MCF 10A (cell line): ENCODE measurements at regions of chr12 and their contacts with region 1.

Region 1: DNA sequence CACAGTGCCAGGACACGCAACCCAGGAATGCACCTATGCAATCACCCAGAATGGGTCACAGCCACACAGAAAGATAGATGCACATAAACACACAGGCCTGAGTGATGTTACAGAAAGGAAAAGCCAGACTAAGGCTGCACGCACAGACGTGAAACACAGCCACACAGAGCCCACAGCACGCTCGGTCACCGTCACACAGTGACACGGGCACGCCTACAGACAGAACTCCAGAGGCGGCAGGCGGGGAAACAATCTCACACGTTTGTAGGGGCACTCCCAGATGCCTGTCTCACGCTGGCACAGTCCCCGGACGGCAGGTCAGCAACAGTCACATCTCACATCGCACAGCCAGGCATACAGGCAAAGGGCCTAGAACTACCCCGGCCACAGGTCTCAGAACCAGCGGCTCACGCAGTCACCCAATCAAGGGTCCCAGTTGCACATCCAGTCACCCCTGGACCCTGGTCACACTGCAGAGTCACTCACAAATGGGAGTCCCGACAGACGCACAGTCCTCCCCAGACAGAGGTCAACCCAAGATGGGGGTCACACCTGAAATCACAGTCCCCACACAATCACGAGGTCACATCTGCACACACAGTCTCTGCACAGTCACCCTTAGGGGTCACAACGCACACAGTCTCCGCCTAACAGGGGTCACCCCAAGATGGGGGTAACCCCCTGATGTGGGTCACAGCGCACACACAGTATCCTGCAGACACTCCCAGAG is 790 bp downstream of the SSH1 start:
- DNase-seq: peak; percentile 69
- H3K4me3 Mint-ChIP-seq: peak overlapping the region; percentile 91
- H3K27ac Mint-ChIP-seq: peak overlapping the region; percentile 92
- H3K4me1 Mint-ChIP-seq: peaks cover 33% of the 10 kb centered on the region
- H3K27me3 Mint-ChIP-seq: no peaks in the 10 kb centered on the region
- CTCF ChIP-seq: no peak

Region 2: DNA sequence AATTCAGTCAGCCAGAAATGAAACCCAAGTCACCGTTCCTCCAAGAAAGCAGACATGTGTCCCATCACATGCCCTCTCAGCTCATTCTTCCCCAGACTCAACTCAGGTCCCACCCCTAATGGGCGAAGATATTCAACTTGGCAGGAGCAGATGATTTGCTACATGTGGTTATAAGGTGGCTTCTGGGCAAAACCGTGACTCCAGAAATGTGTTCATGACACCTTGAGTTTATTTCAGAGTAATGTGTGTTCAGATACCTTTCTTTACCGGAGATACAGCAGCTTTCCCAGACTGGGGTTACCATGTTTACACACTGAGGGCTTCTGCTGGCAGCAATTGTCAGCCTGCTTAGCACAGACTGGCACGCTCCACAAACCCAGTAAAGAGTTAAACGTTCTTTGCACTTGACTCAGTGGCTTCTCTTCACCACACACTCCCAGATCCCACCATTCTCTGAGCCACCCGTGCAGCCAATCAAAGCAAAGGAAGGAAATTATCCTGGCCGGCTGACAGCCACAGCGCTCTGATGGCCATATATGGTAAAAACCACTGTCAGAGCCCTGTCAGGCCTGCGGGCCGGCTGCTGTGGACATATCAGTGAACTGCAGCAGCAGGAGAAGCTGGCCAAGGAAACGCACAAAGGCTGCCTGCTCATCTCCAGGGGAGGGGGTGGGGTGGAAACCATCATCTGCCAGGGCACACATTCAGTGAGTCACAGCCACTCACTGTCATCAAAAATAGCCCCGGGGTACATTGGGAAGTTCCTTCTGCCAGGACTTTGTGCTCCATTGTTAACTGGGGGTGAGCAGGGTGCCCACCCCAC is 165.2 kb before region 1 on chr12:
- CTCF ChIA-PET with region 1: no interaction called
- POLR2A ChIA-PET with region 1: interaction called, 16 read pairs
- intact Hi-C with region 1: no loop called
- DNase-seq: peak; percentile 100
- H3K4me3 Mint-ChIP-seq: peak overlapping the region; percentile 71
- H3K27ac Mint-ChIP-seq: peak overlapping the region; percentile 98
- H3K4me1 Mint-ChIP-seq: peaks cover 46% of the 10 kb centered on the region
- H3K27me3 Mint-ChIP-seq: no peaks in the 10 kb centered on the region
- CTCF ChIP-seq: peak; percentile 22

Region 3: GRCh38 chr12:108816652-108817335 is 39.8 kb before region 1 on chr12:
- CTCF ChIA-PET with region 1: interaction called, 4 read pairs
- POLR2A ChIA-PET with region 1: interaction called, 13 read pairs
- intact Hi-C with region 1: loop called (anchors 1 kb)
- DNase-seq: peak; percentile 33
- H3K4me3 Mint-ChIP-seq: no peak overlapping the region
- H3K27ac Mint-ChIP-seq: peak overlapping the region; percentile 12
- H3K4me1 Mint-ChIP-seq: peaks cover 31% of the 10 kb centered on the region
- H3K27me3 Mint-ChIP-seq: no peaks in the 10 kb centered on the region
- CTCF ChIP-seq: no peak

Region 4: DNA sequence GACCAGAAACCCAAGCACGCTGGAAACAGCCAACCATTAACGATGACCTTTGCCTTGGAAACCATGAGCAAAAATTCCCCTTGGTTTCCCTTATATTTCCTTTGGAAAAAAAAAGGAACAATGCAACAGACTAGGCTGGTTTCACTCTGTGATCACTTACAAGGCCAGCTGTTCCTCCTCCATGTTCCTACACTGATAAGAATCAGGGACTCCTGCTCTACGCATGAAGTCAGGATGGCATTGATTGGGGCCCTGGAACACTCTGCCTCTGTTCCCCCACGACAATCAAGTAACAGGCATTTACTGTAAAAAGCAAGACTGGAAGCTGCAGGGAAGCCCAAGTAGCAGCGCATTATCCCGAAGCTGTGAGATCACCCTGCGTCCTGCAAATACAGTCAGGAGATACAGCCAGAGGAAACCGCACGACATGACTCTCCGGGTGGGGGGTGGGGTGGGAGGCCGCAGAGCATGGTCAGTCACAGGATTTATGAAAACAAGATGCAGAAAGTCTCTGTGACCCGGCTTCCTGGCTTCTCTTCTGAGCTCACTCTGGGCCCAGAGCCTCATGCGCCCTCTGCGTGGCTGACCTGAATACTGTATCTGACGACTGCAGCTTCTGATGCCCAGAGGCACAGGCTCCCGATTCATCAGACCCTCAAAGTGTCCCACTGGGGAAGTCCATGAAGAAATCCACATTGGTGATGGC is 30.3 kb before region 1 on chr12:
- CTCF ChIA-PET with region 1: interaction called, 3 read pairs
- POLR2A ChIA-PET with region 1: interaction called, 4 read pairs
- intact Hi-C with region 1: loop called (anchors 1 kb)
- DNase-seq: no peak
- H3K4me3 Mint-ChIP-seq: no peak overlapping the region
- H3K27ac Mint-ChIP-seq: no peak overlapping the region
- H3K4me1 Mint-ChIP-seq: peaks cover 21% of the 10 kb centered on the region
- H3K27me3 Mint-ChIP-seq: no peaks in the 10 kb centered on the region
- CTCF ChIP-seq: no peak

Region 5: GRCh38 chr12:108838194-108839017 is 18.2 kb before region 1 on chr12:
- CTCF ChIA-PET with region 1: interaction called, 3 read pairs
- POLR2A ChIA-PET with region 1: interaction called, 21 read pairs
- intact Hi-C with region 1: loop called (anchors 2 kb)
- DNase-seq: peak; percentile 98
- H3K4me3 Mint-ChIP-seq: peak overlapping the region; percentile 65
- H3K27ac Mint-ChIP-seq: peak overlapping the region; percentile 87
- H3K4me1 Mint-ChIP-seq: peaks cover 40% of the 10 kb centered on the region
- H3K27me3 Mint-ChIP-seq: no peaks in the 10 kb centered on the region
- CTCF ChIP-seq: no peak

Region 6: GRCh38 chr12:108950991-108951739 is 94.6 kb after region 1 on chr12:
- CTCF ChIA-PET with region 1: interaction called, 8 read pairs
- POLR2A ChIA-PET with region 1: interaction called, 19 read pairs
- intact Hi-C with region 1: loop called (anchors 1 kb)
- DNase-seq: peak; percentile 79
- H3K4me3 Mint-ChIP-seq: no peak overlapping the region
- H3K27ac Mint-ChIP-seq: no peak overlapping the region
- H3K4me1 Mint-ChIP-seq: peaks cover 14% of the 10 kb centered on the region
- H3K27me3 Mint-ChIP-seq: peaks cover 2% of the 10 kb centered on the region
- CTCF ChIP-seq: peak; percentile 81

Region 7: DNA sequence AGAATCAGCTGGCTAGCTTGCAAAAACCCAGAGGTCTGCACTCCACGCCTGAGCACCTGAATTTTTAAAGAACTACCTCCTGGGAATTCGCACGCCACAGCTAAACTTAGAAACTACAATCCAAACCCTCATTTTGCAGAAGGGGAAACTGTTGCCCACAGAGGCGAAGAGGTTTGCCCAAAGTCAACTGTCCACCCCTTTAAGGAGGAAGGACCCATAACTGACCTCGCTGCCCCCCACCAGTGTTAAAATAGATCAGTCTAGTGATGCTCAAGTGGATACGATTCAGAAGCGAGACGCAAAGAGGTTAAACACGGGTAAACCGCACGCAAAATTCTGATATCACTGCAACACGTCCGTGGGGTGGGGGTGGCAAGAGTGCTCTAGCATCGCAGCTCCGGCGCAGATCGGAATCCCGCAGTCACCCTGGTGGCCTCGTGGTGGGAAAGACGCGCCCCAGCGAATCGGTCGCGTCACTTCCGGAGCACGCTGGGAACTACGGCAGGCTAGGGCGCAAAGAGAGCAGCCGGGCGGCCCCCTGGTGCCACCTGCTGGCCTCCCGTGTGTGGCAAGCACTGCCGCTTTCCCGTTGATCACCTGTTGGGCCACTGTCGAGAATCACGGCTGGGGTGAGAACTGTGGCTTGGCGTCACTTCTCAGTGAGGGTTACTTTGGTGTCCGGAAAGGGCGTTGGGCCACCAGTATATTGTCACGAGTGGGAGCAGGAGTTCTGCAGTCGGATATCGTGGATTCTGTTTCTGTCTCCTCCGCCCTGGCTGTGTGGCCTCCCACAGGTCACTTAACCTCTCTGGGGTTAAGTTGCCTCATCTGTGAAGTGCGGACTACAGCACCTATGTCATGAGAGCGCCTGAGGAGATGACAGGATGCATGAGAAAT is 236.7 kb after region 1 on chr12 and contains the start of gene ALKBH2:
- CTCF ChIA-PET with region 1: interaction called, 3 read pairs
- POLR2A ChIA-PET with region 1: interaction called, 15 read pairs
- intact Hi-C with region 1: loop called (anchors 10 kb)
- DNase-seq: peak; percentile 90
- H3K4me3 Mint-ChIP-seq: peak within 1 kb of the TSS; percentile 83
- H3K27ac Mint-ChIP-seq: peak within 1 kb of the TSS; percentile 85
- H3K4me1 Mint-ChIP-seq: peaks cover 23% of the 10 kb centered on the region
- H3K27me3 Mint-ChIP-seq: no peaks in the 10 kb centered on the region
- CTCF ChIP-seq: peak; percentile 88
- total RNA-seq, gene ALKBH2: 38.9 and 48.9 TPM in 2 replicates